AG04450 (cell line): ENCODE measurements at regions of chr16 and their contacts with region 1.

Region 1: GRCh38 chr16:56600398-56600999 is 7.9 kb upstream of the MT2A start:
- DNase-seq: no peak
- H3K4me3 ChIP-seq: no peak overlapping the region
- H3K27ac ChIP-seq: no peak overlapping the region
- H3K27me3 ChIP-seq: no peaks in the 10 kb centered on the region
- CTCF ChIP-seq: peak; percentile 78

Region 2: DNA sequence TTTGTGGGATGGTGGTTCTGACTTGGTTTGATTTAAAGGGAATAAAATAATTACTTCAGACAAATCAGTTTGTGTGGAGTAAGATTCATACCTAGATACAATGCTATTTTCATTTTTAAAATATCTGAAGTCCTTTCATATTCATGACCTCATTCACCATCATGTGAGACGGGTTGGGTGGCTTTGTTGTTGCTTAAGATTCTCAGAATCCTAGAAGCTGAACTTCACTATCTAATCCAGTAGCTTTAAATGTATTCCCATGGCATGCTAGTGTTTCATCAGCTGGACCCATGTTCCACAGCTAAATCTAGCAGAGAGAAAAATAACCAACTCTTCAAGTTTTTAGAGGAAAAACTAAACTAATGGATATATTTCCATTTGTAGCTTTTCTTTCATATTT is 172.4 kb before region 1 on chr16:
- CTCF ChIA-PET with region 1: no interaction called
- POLR2A ChIA-PET with region 1: no interaction called
- DNase-seq: no peak
- H3K4me3 ChIP-seq: no peak overlapping the region
- H3K27ac ChIP-seq: no peak overlapping the region
- H3K27me3 ChIP-seq: no peaks in the 10 kb centered on the region
- CTCF ChIP-seq: no peak

Region 3: GRCh38 chr16:56513972-56514371 is 86.5 kb before region 1 on chr16:
- CTCF ChIA-PET with region 1: interaction called, 17 read pairs
- POLR2A ChIA-PET with region 1: no interaction called
- DNase-seq: peak; percentile 29
- H3K4me3 ChIP-seq: no peak overlapping the region
- H3K27ac ChIP-seq: no peak overlapping the region
- H3K27me3 ChIP-seq: no peaks in the 10 kb centered on the region
- CTCF ChIP-seq: peak; percentile 81

Region 4: GRCh38 chr16:56576585-56577293 is 23.8 kb before region 1 on chr16:
- CTCF ChIA-PET with region 1: interaction called, 12 read pairs
- POLR2A ChIA-PET with region 1: no interaction called
- DNase-seq: peak; percentile 8
- H3K4me3 ChIP-seq: no peak overlapping the region
- H3K27ac ChIP-seq: no peak overlapping the region
- H3K27me3 ChIP-seq: no peaks in the 10 kb centered on the region
- CTCF ChIP-seq: peak; percentile 76